Calu3 (cell line): ENCODE measurements at regions of chr17 and their contacts with region 1.

Region 1: GRCh38 chr17:59753522-59754467 is 46.3 kb downstream of the VMP1 start:
- DNase-seq: peak; percentile 21
- H3K4me3 Mint-ChIP-seq: peak overlapping the region; percentile 43
- H3K27ac Mint-ChIP-seq: peak overlapping the region; percentile 96
- H3K4me1 Mint-ChIP-seq: peaks cover 17% of the 10 kb centered on the region
- H3K27me3 Mint-ChIP-seq: no peaks in the 10 kb centered on the region
- CTCF ChIP-seq: peak; percentile 44

Region 2: GRCh38 chr17:59853168-59853918 is 99.5 kb after region 1 on chr17:
- CTCF ChIA-PET with region 1: interaction called, 13 read pairs
- intact Hi-C with region 1: loop called (anchors 2 kb)
- DNase-seq: peak; percentile 85
- H3K4me3 Mint-ChIP-seq: peak overlapping the region; percentile 20
- H3K27ac Mint-ChIP-seq: peak overlapping the region; percentile 78
- H3K4me1 Mint-ChIP-seq: peaks cover 47% of the 10 kb centered on the region
- H3K27me3 Mint-ChIP-seq: no peaks in the 10 kb centered on the region
- CTCF ChIP-seq: peak; percentile 66

Region 3: DNA sequence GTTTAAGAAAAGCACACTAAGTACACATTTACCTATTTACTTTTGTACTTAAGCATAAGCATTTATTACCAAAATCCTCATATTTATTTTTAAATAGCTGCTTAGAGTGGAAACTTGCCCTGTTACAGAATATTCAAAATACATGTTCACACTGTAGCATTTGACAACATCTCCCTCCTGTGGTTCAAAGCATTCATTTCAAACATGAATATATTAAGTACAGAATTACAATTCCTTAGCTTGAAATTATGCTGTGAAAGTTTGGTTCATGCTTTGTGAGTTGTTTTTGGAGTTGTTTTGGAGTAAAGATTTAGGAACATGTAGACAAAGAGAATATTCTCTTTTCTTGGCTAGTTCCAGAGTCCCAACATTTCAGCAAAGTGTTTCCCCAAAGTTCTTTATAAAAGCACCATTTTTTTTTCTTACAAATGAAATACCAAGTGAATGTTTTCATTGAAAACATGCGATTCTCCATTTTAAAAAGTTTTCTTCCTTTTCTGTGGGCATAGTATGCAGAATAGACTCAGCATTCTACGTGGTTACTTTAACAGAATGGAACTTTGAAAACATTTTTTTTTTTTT is 105.7 kb after region 1 on chr17:
- CTCF ChIA-PET with region 1: interaction called, 13 read pairs
- intact Hi-C with region 1: loop called (anchors 2 kb)
- DNase-seq: no peak
- H3K4me3 Mint-ChIP-seq: no peak overlapping the region
- H3K27ac Mint-ChIP-seq: no peak overlapping the region
- H3K4me1 Mint-ChIP-seq: peaks cover 17% of the 10 kb centered on the region
- H3K27me3 Mint-ChIP-seq: no peaks in the 10 kb centered on the region
- CTCF ChIP-seq: no peak